ENCODE measurements at regions of chr14 and their contacts with region 1.

Region 1: GRCh38 chr14:102096214-102097114 is 9.6 kb upstream of the HSP90AA1 start:
- DNase-seq: peak; percentile 83 to 87
- ATAC-seq: peak; percentile 68 to 95 (median 90)
- H3K4me3 ChIP-seq: no peak overlapping the region
- H3K27ac ChIP-seq: no peak overlapping the region
- H3K4me1 ChIP-seq: peaks cover 0 to 10% (median 4%) of the 10 kb centered on the region in 9 donors
- H3K27me3 ChIP-seq: no peaks in the 10 kb centered on the region
- CTCF ChIP-seq: peak; percentile 75 to 90 (median 88)

Region 2: DNA sequence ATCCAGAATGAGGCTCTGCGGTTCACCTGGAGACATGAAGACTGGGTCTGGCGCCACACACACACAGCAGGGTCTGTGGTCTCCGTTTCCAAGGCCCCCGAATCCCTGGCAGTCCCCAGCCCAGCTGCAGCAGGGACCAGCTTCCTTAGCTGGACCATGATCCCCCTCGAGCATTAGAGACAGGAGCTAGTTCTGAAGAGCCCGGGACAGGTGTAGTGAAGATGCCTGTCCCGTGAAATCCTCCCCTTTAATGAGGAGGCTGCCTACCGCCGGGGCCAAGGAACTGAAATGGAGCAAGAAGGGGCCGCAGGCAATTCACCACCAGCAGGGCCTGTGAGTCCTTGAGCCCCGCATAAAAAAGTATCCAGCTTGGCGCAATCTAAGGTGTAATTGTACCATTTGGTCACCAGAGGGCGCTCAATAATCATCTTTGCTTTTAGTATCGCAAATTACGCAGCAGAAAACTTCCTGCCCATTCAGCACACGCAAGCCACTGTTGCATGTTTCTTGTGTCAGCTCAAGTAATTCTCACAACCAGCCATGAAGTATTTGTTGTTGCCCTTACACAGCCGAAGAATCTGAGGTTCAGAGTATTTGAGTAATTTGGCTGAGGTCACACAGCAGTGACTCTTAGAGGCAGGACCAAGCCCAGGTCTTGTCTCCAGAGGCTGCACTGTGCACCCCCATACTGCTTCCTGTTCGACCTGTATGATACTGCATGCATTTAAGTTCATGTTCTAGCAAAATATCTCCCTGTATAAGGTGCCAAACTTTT is 389.2 kb before region 1 on chr14:
- intact Hi-C with region 1: loop called in 7 of 10 experiments (anchors 1 to 10 kb)
- DNase-seq: peak in 1 of 2 donors; percentile 79
- ATAC-seq: peak; percentile 38 to 83 (median 64)
- H3K4me3 ChIP-seq: peak overlapping the region in 2 of 10 donors; percentile 1 to 25
- H3K27ac ChIP-seq: peak overlapping the region in 9 of 10 donors; percentile 71 to 90 (median 84)
- H3K4me1 ChIP-seq: peaks cover 10 to 33% (median 25%) of the 10 kb centered on the region in 9 donors
- H3K27me3 ChIP-seq: peaks cover 0 to 29% (median 5%) of the 10 kb centered on the region in 7 donors
- CTCF ChIP-seq: peak; percentile 72 to 90 (median 84)

Region 3: GRCh38 chr14:102063091-102063802 is 33.2 kb before region 1 on chr14:
- intact Hi-C with region 1: loop called in 8 of 10 experiments (anchors 1 to 5 kb)
- DNase-seq: peak; percentile 88 to 89
- ATAC-seq: peak; percentile 88 to 97 (median 96)
- H3K4me3 ChIP-seq: no peak overlapping the region
- H3K27ac ChIP-seq: peak overlapping the region in 1 of 10 donors; percentile 30
- H3K4me1 ChIP-seq: peaks cover 0 to 19% (median 7%) of the 10 kb centered on the region in 9 donors
- H3K27me3 ChIP-seq: no peaks in the 10 kb centered on the region
- CTCF ChIP-seq: peak in 8 of 9 donors; percentile 24 to 71 (median 58)

Region 4: GRCh38 chr14:102200690-102201352 is 104.4 kb after region 1 on chr14:
- intact Hi-C with region 1: no loop called
- DNase-seq: no peak
- ATAC-seq: peak in 3 of 8 donors; percentile 11 to 41 (median 31)
- H3K4me3 ChIP-seq: no peak overlapping the region
- H3K27ac ChIP-seq: no peak overlapping the region
- H3K4me1 ChIP-seq: peaks cover 0 to 21% (median 14%) of the 10 kb centered on the region in 9 donors
- H3K27me3 ChIP-seq: no peaks in the 10 kb centered on the region
- CTCF ChIP-seq: no peak